CD8-positive, alpha-beta T cell (primary cell): ENCODE measurements at regions of chr12 and their contacts with region 1.

Region 1: DNA sequence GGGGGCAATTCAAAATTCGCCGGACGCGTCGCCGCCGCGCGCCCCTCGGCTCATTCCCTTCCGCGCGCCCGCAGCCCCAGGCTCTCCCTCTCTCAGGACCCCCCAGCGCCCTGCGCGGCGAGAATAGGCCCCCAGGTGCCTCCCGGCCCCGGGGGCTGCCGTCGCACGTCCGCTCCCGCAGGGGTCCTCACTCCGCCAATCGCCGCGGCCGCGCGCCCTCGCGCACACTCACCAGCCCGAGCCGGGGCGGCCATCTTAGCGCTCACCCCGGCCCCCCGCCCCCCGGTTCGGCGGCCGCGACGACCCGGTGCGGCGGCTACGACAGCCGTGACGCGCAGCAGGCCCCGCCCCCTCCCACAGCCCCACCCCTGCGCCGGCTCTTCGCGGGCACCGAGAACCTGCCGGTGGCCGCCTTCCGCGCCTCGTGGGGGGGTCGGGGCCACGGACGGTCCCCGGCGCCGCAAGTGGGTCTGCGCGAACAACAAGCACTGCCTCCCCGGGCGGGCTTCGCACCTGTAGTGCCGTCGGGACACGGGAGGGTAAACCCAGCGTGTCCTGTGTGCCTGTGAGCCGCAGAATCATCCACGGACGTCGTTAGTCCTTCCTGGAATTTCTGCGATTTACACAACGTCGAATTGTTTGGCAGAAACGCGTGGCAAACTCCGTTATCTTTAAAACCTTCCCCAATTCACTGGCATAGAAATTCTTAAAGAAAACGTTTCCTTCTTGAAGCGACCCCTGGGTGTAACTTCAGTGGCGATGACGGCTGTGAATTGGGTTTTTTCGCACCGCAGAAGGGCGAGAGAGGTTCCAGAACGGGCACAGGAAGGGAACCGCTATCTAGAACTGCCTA is 2.5 kb downstream of the USP44 start:
- DNase-seq: peak; percentile 47 to 88 (median 71)
- ATAC-seq: peak; percentile 73
- H3K4me3 ChIP-seq: peak overlapping the region; percentile 65 to 81
- H3K4me3 Mint-ChIP-seq: peak overlapping the region; percentile 95
- H3K27ac ChIP-seq: peak overlapping the region; percentile 77 to 86
- H3K27ac Mint-ChIP-seq: peak overlapping the region; percentile 96
- H3K4me1 ChIP-seq: peaks cover 25% of the 10 kb centered on the region
- H3K4me1 Mint-ChIP-seq: peaks cover 57% of the 10 kb centered on the region
- H3K27me3 ChIP-seq: peaks cover 0 to 2% of the 10 kb centered on the region in 2 experiments
- H3K27me3 Mint-ChIP-seq: no peaks in the 10 kb centered on the region
- CTCF ChIP-seq: no peak

Region 2: DNA sequence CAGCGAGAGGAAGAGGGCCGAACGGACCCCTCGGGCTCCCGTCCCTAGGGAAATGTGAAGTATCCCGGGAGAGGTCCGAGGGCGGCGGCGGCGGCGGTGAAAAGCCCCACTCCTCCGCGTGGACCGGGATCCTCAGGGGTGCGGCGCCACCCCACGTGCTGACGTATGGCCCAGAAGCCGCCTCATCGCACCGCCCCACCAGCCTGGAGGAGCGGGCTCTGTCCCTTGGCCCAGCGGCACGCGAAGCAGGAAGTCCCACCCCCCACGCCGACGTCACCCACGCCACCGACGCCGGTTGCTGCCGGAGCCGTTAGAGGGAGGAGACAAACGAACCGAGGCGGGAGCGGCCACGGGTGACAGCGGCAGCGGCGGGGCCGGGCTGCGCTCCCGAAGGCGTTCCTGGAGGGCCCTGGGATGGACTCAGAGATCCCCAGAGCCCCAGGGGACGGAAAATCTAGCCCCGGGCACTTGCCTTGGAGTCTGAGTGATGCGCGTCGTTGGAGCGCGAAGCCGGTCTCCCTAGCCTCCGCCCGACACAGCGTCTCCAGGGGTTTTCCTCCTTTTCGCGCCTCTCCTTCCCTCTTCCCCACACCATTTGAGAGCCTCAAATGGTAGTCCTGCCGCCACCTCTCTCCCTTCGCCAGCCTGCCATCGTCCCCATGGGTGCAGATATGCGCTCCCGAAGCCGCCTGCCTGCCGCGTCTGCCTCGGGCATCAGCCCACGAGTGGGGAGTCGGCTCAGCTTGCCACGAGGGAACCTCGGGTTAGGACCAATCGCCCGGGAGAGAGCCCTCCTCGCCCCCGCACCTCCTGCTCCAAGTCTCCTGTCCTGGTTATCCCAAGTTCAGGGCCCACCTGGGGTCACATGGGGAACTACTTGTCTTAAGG is 1088.8 kb before region 1 on chr12 and contains the start of gene CEP83:
- CTCF ChIA-PET with region 1: no interaction called
- POLR2A ChIA-PET with region 1: no interaction called
- intact Hi-C with region 1: loop called in 1 of 2 experiments (anchors 2 kb)
- DNase-seq: peak; percentile 90 to 98 (median 97)
- ATAC-seq: peak; percentile 96
- H3K4me3 ChIP-seq: peak within 1 kb of the TSS; percentile 94 to 96
- H3K4me3 Mint-ChIP-seq: peak within 1 kb of the TSS; percentile 96
- H3K27ac ChIP-seq: peak within 1 kb of the TSS; percentile 91 to 93
- H3K27ac Mint-ChIP-seq: peak within 1 kb of the TSS; percentile 94
- H3K4me1 ChIP-seq: peaks cover 6% of the 10 kb centered on the region
- H3K4me1 Mint-ChIP-seq: peaks cover 33% of the 10 kb centered on the region
- H3K27me3 ChIP-seq: peaks cover 0 to 2% of the 10 kb centered on the region in 2 experiments
- H3K27me3 Mint-ChIP-seq: peaks cover 5% of the 10 kb centered on the region
- CTCF ChIP-seq: no peak
- total RNA-seq, gene CEP83: 9.7 to 11.2 TPM

Region 3: GRCh38 chr12:94498073-94498472 is 1050.7 kb before region 1 on chr12:
- CTCF ChIA-PET with region 1: no interaction called
- POLR2A ChIA-PET with region 1: no interaction called
- intact Hi-C with region 1: no loop called
- DNase-seq: peak in 2 of 9 experiments; percentile 4
- ATAC-seq: no peak
- H3K4me3 ChIP-seq: no peak overlapping the region
- H3K4me3 Mint-ChIP-seq: no peak overlapping the region
- H3K27ac ChIP-seq: no peak overlapping the region
- H3K27ac Mint-ChIP-seq: peak overlapping the region; percentile 45
- H3K4me1 ChIP-seq: no peaks in the 10 kb centered on the region
- H3K4me1 Mint-ChIP-seq: no peaks in the 10 kb centered on the region
- H3K27me3 ChIP-seq: no peaks in the 10 kb centered on the region
- H3K27me3 Mint-ChIP-seq: peaks cover 4% of the 10 kb centered on the region
- CTCF ChIP-seq: no peak

Region 4: DNA sequence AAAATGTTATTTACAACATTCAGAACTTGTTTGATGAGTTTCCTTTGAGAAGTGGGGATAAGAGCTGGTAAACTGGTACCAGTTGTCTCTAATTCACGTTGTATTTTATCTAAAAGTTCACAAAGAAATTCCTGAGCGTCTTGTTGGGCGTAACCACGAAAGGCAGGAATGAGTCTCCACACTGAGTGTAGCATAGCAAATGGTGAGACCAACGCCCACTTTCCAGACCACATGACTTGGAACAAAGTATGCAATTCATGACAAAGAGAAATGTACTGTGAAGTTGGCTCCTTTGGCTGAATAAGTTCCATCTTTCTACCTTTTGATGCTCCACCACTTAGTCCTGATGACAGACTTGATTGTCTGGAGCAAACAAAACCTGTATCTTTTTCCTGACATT is 15.9 kb before region 1 on chr12:
- CTCF ChIA-PET with region 1: interaction called, 18 read pairs
- POLR2A ChIA-PET with region 1: interaction called, 4 read pairs
- intact Hi-C with region 1: no loop called
- DNase-seq: no peak
- ATAC-seq: no peak
- H3K4me3 ChIP-seq: no peak overlapping the region
- H3K4me3 Mint-ChIP-seq: no peak overlapping the region
- H3K27ac ChIP-seq: no peak overlapping the region
- H3K27ac Mint-ChIP-seq: no peak overlapping the region
- H3K4me1 ChIP-seq: no peaks in the 10 kb centered on the region
- H3K4me1 Mint-ChIP-seq: peaks cover 12% of the 10 kb centered on the region
- H3K27me3 ChIP-seq: no peaks in the 10 kb centered on the region
- H3K27me3 Mint-ChIP-seq: peaks cover 2% of the 10 kb centered on the region
- CTCF ChIP-seq: no peak

Region 5: GRCh38 chr12:95571369-95571768 is 22.6 kb after region 1 on chr12:
- CTCF ChIA-PET with region 1: interaction called, 3 read pairs
- POLR2A ChIA-PET with region 1: interaction called, 3 read pairs
- intact Hi-C with region 1: loop called in 1 of 2 experiments (anchors 2 kb)
- DNase-seq: no peak
- ATAC-seq: no peak
- H3K4me3 ChIP-seq: no peak overlapping the region
- H3K4me3 Mint-ChIP-seq: no peak overlapping the region
- H3K27ac ChIP-seq: no peak overlapping the region
- H3K27ac Mint-ChIP-seq: no peak overlapping the region
- H3K4me1 ChIP-seq: peaks cover 9% of the 10 kb centered on the region
- H3K4me1 Mint-ChIP-seq: peaks cover 26% of the 10 kb centered on the region
- H3K27me3 ChIP-seq: no peaks in the 10 kb centered on the region
- H3K27me3 Mint-ChIP-seq: no peaks in the 10 kb centered on the region
- CTCF ChIP-seq: no peak

Region 6: DNA sequence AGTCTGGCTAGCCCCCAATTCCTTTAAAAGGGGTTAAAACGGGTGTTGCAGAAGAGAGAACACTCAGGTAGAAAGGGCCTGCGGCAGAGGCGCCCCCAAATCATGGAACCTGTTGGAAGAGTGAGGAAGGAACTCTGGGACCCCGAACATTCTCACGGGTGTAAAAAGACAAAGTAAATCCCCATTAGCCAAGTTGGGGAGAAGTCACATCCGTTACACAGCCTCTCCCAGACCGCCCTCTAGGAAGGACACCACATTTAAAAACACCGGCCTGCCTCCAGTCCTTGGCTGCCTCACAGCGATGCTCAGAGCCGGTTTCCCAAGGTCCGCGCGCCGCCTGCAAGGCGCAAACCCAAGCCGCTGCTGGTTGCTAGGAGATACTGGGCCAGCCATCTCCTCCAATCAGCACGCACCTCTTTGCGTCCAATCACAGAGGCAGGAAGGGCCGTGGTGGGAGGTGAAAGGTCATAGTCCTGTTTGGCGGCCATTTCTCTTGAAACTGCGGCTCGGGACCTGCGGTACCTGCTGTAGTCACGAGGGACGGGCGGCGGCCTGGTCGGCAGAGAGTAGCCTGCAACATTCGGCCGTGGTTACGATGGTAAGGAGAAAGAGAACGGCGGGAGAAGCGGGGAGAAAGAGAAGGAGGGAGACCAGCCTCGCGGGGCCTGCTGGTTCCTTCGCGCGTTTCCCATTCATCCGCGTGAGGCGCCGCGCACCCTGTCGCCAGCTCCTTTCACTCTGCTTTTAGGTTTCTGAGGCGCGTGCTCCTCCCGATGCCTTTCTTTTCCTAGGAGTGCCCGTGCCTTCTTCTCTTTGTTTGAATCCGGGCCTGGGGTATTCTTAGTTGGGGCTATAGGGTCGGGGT is 309.9 kb after region 1 on chr12 and contains the start of gene SNRPF:
- CTCF ChIA-PET with region 1: no interaction called
- POLR2A ChIA-PET with region 1: no interaction called
- intact Hi-C with region 1: loop called (anchors 5 to 10 kb)
- DNase-seq: peak; percentile 88 to 97 (median 92)
- ATAC-seq: peak; percentile 94
- H3K4me3 ChIP-seq: peak within 1 kb of the TSS; percentile 83 to 86
- H3K4me3 Mint-ChIP-seq: no peak within 1 kb of the TSS
- H3K27ac ChIP-seq: peak within 1 kb of the TSS; percentile 79 to 92
- H3K27ac Mint-ChIP-seq: no peak within 1 kb of the TSS
- H3K4me1 ChIP-seq: peaks cover 22% of the 10 kb centered on the region
- H3K4me1 Mint-ChIP-seq: peaks cover 21% of the 10 kb centered on the region
- H3K27me3 ChIP-seq: peaks cover 0 to 2% of the 10 kb centered on the region in 2 experiments
- H3K27me3 Mint-ChIP-seq: peaks cover 3% of the 10 kb centered on the region
- CTCF ChIP-seq: no peak
- total RNA-seq, gene SNRPF: 42.9 to 49.2 TPM

Region 7: DNA sequence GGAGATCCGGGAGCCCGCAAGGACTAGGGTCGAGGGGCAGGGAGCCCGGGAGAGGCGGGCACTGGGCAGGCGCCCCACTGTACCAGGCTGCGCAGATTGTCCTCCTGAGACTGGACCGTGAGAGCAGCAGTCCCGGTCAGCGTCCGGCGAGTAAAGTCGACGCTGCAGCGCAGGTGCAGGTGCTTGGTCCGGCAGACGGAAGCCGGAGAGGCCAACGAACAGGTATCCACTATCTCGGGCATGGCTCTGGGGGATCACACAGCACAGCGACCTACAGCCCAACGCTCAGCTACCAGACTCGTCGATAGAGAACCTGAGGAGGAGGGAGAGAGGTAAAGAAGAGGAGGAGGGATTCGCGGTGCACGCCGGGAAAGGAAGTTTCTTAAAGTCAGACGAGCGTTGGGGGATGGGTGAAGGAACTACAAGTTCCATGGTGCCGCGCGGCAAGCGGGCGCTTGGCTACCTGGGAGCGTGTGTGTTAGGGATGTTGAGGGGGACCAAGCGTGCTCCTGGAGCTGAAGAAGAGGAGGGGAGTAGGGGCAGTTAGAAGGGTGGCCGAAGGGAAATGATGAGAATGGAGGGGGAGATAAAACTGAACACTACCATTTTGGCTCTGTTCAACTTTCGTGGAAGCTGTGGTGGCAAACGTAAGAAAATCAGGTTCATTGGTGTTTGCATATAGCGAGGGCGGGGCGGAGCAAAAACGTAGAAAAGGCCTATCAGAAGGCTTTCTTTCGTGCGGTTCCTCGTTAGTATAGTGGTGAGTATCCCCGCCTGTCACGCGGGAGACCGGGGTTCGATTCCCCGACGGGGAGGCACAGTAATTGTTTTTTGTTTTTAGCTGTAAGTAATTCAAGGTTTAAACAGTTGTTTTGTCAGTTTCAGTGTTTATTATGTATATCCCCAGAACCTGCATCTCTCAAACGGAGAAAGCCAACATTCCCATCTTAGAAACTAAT is 486.8 kb after region 1 on chr12 and contains the start of gene LTA4H:
- CTCF ChIA-PET with region 1: no interaction called
- POLR2A ChIA-PET with region 1: no interaction called
- intact Hi-C with region 1: loop called in 1 of 2 experiments (anchors 10 kb)
- DNase-seq: peak; percentile 90 to 99 (median 97)
- ATAC-seq: peak; percentile 92
- H3K4me3 ChIP-seq: peak within 1 kb of the TSS; percentile 65 to 92
- H3K4me3 Mint-ChIP-seq: no peak within 1 kb of the TSS
- H3K27ac ChIP-seq: peak within 1 kb of the TSS; percentile 68 to 78
- H3K27ac Mint-ChIP-seq: no peak within 1 kb of the TSS
- H3K4me1 ChIP-seq: peaks cover 14% of the 10 kb centered on the region
- H3K4me1 Mint-ChIP-seq: peaks cover 12% of the 10 kb centered on the region
- H3K27me3 ChIP-seq: no peaks in the 10 kb centered on the region
- H3K27me3 Mint-ChIP-seq: no peaks in the 10 kb centered on the region
- CTCF ChIP-seq: no peak
- total RNA-seq, gene LTA4H: 38.4 to 42.9 TPM